GM10248 (cell line): ENCODE measurements at regions of chr7 and their contacts with region 1.

Region 1: GRCh38 chr7:111405621-111406020 is 156.7 kb downstream of the IMMP2L start:
- DNase-seq: no peak
- CTCF ChIP-seq: no peak

Region 2: DNA sequence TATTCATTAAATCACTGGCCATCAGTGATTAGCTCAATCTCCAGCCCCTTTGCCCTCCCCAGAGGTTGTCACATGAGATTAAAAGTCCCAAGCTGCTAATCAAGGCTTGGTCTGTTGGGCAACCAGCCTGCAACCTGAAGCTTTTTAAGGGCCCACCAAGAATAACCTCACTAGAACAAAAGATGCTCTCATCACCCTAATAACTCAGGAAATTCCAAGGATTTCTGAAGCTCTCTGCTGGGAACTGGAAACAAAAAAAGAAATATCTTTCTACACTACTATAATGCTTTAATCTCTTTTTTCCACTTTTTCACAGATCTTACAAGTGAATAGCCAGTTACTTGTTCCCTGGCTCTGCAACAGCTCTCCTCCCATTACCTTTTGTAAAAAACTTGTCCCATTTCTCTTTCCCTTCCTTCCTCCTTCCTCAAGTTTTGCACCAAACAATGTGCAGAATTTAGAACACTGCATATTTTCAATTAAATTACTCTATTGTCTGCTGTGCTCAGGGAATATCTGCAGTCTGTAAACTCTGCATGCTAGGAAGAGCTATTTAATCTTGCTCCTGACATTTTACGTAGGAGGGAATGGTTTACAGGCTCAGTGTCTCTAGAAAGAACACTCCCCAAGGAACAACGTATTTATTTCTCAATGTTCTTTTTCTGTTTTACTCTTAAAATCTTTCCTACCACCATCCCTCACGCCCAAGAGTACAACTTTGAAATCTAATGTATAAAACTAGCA is 12.4 kb before region 1 on chr7:
- CTCF ChIA-PET with region 1: interaction called, 10 read pairs
- POLR2A ChIA-PET with region 1: no interaction called
- DNase-seq: no peak
- CTCF ChIP-seq: no peak